Heart right ventricle (tissue), 16 donors: ENCODE measurements at regions of chr15 and their contacts with region 1.

Region 1: GRCh38 chr15:60772395-60773120 is 293.6 kb upstream of the ICE2 start:
- DNase-seq: no peak
- ATAC-seq: no peak
- H3K4me3 ChIP-seq: no peak overlapping the region
- H3K27ac ChIP-seq: no peak overlapping the region
- H3K4me1 ChIP-seq: no peaks in the 10 kb centered on the region
- H3K27me3 ChIP-seq: no peaks in the 10 kb centered on the region
- CTCF ChIP-seq: no peak

Region 2: GRCh38 chr15:59687836-59688235 is 1084.7 kb before region 1 on chr15:
- intact Hi-C with region 1: no loop called
- DNase-seq: no peak
- ATAC-seq: no peak
- H3K4me3 ChIP-seq: peak overlapping the region; percentile 72 to 99 (median 90)
- H3K27ac ChIP-seq: peak overlapping the region in 9 of 10 donors; percentile 95 to 99 (median 99)
- H3K4me1 ChIP-seq: peaks cover 0 to 61% (median 38%) of the 10 kb centered on the region in 9 donors
- H3K27me3 ChIP-seq: no peaks in the 10 kb centered on the region
- CTCF ChIP-seq: no peak

Region 3: GRCh38 chr15:60819860-60820259 is 47.3 kb after region 1 on chr15:
- intact Hi-C with region 1: loop called in 1 of 10 experiments (anchors 5 kb)
- DNase-seq: no peak
- ATAC-seq: peak in 2 of 8 donors; percentile 27 to 45
- H3K4me3 ChIP-seq: no peak overlapping the region
- H3K27ac ChIP-seq: no peak overlapping the region
- H3K4me1 ChIP-seq: peaks cover 0 to 5% (median 0%) of the 10 kb centered on the region in 9 donors
- H3K27me3 ChIP-seq: no peaks in the 10 kb centered on the region
- CTCF ChIP-seq: no peak

Region 4: DNA sequence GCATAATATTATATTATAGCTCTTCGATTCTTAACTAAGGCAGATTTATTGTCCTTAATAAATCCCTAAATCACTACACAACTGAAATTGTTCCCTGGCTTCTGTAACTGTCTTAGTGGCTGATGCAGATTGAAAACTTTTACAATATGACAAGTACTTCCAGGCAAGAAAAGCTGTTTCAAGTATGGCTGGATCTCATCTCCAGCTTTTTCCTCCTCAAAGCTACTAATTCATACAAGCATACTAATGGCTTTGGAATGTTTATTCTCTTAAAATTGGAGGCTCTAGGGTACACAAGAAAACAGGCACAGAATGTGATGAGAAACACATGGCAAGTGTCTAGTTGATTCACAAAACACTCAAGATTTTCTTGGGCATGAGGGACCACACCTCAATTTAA is 57.9 kb after region 1 on chr15:
- intact Hi-C with region 1: no loop called
- DNase-seq: no peak
- ATAC-seq: peak in 3 of 8 donors; percentile 27 to 50 (median 44)
- H3K4me3 ChIP-seq: no peak overlapping the region
- H3K27ac ChIP-seq: peak overlapping the region in 1 of 10 donors; percentile 32
- H3K4me1 ChIP-seq: peaks cover 0 to 12% (median 0%) of the 10 kb centered on the region in 9 donors
- H3K27me3 ChIP-seq: no peaks in the 10 kb centered on the region
- CTCF ChIP-seq: no peak

Region 5: DNA sequence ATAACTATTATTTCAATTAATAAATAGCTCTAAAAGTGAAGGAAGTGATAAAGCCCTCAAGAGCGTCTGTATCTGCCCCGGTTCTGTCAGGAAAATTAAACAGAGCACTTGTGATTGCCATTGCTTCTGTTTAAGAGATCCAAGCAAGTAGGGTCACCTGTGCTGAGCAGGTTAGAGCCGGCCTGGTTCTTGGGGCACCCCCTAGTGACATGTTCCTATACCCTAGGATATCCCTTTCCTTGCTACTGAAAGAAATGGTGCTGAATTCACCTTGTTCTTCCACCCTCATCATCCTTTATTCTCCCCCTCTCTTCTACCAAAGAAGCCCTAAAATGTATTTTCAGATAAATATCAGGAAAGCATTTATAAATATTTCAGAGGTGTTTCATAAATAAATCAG is 133.0 kb after region 1 on chr15:
- intact Hi-C with region 1: loop called in 1 of 10 experiments (anchors 10 kb)
- DNase-seq: no peak
- ATAC-seq: no peak
- H3K4me3 ChIP-seq: no peak overlapping the region
- H3K27ac ChIP-seq: no peak overlapping the region
- H3K4me1 ChIP-seq: peaks cover 0 to 12% (median 0%) of the 10 kb centered on the region in 9 donors
- H3K27me3 ChIP-seq: no peaks in the 10 kb centered on the region
- CTCF ChIP-seq: peak in 1 of 9 donors; percentile 10

Region 6: GRCh38 chr15:61084944-61085367 is 312.4 kb after region 1 on chr15:
- intact Hi-C with region 1: no loop called
- DNase-seq: peak; percentile 15 to 42
- ATAC-seq: peak; percentile 50 to 77 (median 76)
- H3K4me3 ChIP-seq: no peak overlapping the region
- H3K27ac ChIP-seq: peak overlapping the region in 1 of 10 donors; percentile 11
- H3K4me1 ChIP-seq: peaks cover 0 to 31% (median 8%) of the 10 kb centered on the region in 9 donors
- H3K27me3 ChIP-seq: no peaks in the 10 kb centered on the region
- CTCF ChIP-seq: no peak